ENCODE measurements at regions of chr13 and their contacts with region 1.

Region 1: GRCh38 chr13:99356158-99357091 is 49.2 kb upstream of the GPR183 start:
- DNase-seq: peak; percentile 70
- H3K4me3 Mint-ChIP-seq: peak overlapping the region; percentile 58
- H3K27ac Mint-ChIP-seq: peak overlapping the region; percentile 93
- H3K4me1 Mint-ChIP-seq: peaks cover 97% of the 10 kb centered on the region
- H3K27me3 Mint-ChIP-seq: no peaks in the 10 kb centered on the region

Region 2: DNA sequence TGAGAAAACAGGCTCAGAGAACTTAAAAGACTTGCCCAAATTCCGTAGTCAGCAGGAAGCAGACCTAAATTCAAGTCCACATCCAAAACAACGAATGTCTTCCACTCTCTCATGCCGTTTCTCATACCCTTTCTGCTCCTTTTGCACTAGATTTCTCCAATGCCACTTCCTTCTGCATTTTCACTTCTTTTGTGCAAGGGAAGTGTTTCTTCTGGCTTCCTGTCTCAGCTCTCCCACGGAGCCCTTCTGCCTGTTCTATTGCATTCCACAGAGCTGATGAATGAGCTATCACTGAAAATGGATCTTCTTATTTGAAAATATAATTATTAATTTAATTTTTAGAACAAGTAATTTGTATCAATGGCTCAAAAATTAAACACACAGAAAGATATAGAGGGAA is 723.5 kb before region 1 on chr13:
- CTCF ChIA-PET with region 1: no interaction called
- intact Hi-C with region 1: no loop called
- DNase-seq: no peak
- H3K4me3 Mint-ChIP-seq: no peak overlapping the region
- H3K27ac Mint-ChIP-seq: no peak overlapping the region
- H3K4me1 Mint-ChIP-seq: peaks cover 2% of the 10 kb centered on the region
- H3K27me3 Mint-ChIP-seq: no peaks in the 10 kb centered on the region

Region 3: GRCh38 chr13:98918771-98919170 is 437.7 kb before region 1 on chr13:
- CTCF ChIA-PET with region 1: no interaction called
- intact Hi-C with region 1: loop called (anchors 1 kb)
- DNase-seq: peak; percentile 49
- H3K4me3 Mint-ChIP-seq: no peak overlapping the region
- H3K27ac Mint-ChIP-seq: peak overlapping the region; percentile 57
- H3K4me1 Mint-ChIP-seq: peaks cover 49% of the 10 kb centered on the region
- H3K27me3 Mint-ChIP-seq: no peaks in the 10 kb centered on the region

Region 4: GRCh38 chr13:99200432-99201167 is 155.8 kb before region 1 on chr13 and contains the start of gene UBAC2:
- CTCF ChIA-PET with region 1: interaction called, 3 read pairs
- intact Hi-C with region 1: loop called (anchors 2 kb)
- DNase-seq: peak; percentile 95
- H3K4me3 Mint-ChIP-seq: peak within 1 kb of the TSS; percentile 91
- H3K27ac Mint-ChIP-seq: peak within 1 kb of the TSS; percentile 90
- H3K4me1 Mint-ChIP-seq: peaks cover 60% of the 10 kb centered on the region
- H3K27me3 Mint-ChIP-seq: no peaks in the 10 kb centered on the region
- total RNA-seq, gene UBAC2: 43.4 to 44.9 TPM

Region 5: GRCh38 chr13:99288089-99288488 is 68.3 kb before region 1 on chr13:
- CTCF ChIA-PET with region 1: interaction called, 3 read pairs
- intact Hi-C with region 1: loop called (anchors 1 kb)
- DNase-seq: peak; percentile 89
- H3K4me3 Mint-ChIP-seq: peak overlapping the region; percentile 37
- H3K27ac Mint-ChIP-seq: peak overlapping the region; percentile 89
- H3K4me1 Mint-ChIP-seq: peaks cover 80% of the 10 kb centered on the region
- H3K27me3 Mint-ChIP-seq: no peaks in the 10 kb centered on the region

Region 6: GRCh38 chr13:99314640-99315176 is 41.7 kb before region 1 on chr13:
- CTCF ChIA-PET with region 1: interaction called, 5 read pairs
- intact Hi-C with region 1: loop called (anchors 2 kb)
- DNase-seq: peak; percentile 92
- H3K4me3 Mint-ChIP-seq: peak overlapping the region; percentile 54
- H3K27ac Mint-ChIP-seq: peak overlapping the region; percentile 96
- H3K4me1 Mint-ChIP-seq: peaks cover 82% of the 10 kb centered on the region
- H3K27me3 Mint-ChIP-seq: no peaks in the 10 kb centered on the region

Region 7: DNA sequence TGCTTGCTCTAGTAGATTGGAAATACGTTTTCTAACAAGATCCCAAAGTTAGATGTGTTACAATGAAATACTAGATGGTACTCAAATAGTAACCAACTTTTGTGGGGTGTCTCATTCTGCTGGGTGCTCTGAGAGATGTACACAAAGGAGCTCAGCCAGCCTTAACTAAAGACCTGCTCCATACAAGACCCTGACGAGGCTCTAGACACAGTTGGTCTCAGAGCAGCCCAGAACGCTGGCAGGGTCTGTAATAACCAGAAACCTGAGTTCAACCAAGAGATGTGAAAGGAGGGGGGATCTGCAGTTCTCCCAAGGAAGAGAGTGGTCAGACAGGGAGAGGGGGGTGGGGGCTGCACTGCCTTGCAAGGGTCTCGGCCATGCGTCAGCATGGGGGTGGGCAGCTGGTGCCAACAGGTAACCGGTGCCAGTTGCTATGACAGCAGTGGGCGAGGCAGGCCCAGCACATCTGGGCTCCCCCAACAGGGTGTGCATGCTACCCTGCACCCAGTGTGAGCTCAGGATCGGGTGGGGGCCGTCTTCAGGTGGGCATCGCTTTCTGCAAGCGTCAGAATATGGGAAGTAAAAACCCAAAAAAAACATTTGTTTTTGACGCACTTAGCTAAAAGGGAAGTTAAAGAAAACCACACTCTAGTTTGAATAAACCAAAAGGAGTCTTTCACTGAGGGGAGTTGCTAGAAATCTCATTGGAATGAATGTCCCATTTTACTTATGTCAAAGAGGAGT is 18.7 kb after region 1 on chr13:
- CTCF ChIA-PET with region 1: interaction called, 4 read pairs
- intact Hi-C with region 1: loop called (anchors 1 kb)
- DNase-seq: no peak
- H3K4me3 Mint-ChIP-seq: no peak overlapping the region
- H3K27ac Mint-ChIP-seq: no peak overlapping the region
- H3K4me1 Mint-ChIP-seq: peaks cover 80% of the 10 kb centered on the region
- H3K27me3 Mint-ChIP-seq: no peaks in the 10 kb centered on the region

Region 8: DNA sequence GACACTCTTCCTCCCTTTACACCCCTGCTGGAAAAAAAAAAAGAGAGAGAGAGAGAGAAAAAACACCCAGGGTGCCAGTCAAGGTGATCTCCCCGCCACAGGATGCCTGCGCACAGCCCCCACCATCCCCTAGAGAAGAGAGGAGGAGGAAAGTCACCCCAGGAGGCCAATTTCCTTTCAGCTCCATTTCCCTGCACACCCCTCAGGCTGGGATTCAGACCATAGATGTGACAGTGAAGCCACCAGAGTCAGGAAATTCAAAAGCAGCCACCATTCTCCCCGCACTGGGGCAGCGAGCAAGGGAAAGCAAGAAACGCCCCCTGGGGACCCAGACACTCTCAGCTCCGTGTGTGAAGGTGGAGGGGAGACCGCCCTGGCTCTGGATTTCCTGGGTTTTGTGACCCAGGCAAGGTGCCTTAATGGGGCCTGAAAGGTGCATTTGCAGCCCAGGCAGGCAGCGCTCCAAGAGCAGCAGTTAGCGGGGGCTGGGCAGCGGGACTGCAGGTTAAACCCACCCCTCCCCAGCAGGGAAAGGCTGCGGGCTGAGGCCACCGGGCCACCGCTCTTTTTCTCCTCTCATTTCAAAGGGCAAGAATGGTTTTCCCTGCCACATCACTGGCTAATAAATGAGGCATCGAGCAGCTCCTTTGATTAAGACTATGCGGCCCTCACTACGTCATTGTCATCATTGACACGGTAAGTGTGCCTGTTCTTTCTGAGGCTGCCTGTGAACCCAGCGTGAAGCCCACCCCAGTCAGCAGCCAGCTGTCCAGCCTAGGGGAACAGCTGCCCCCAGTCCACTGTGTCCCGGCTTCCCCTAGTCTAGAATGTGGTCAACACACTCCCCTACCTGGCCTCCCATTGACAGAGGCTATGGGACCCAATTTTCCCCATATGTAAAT is 61.0 kb after region 1 on chr13:
- CTCF ChIA-PET with region 1: interaction called, 3 read pairs
- intact Hi-C with region 1: loop called (anchors 2 kb)
- DNase-seq: peak; percentile 71
- H3K4me3 Mint-ChIP-seq: no peak overlapping the region
- H3K27ac Mint-ChIP-seq: no peak overlapping the region
- H3K4me1 Mint-ChIP-seq: peaks cover 64% of the 10 kb centered on the region
- H3K27me3 Mint-ChIP-seq: peaks cover 2% of the 10 kb centered on the region

Measured in activated naive CD4-positive, alpha-beta T cell treated with anti-CD3 and anti-CD28 coated beads for 36 hours (primary cell).